ENCODE measurements at regions of chr12 and their contacts with region 1.

Region 1: DNA sequence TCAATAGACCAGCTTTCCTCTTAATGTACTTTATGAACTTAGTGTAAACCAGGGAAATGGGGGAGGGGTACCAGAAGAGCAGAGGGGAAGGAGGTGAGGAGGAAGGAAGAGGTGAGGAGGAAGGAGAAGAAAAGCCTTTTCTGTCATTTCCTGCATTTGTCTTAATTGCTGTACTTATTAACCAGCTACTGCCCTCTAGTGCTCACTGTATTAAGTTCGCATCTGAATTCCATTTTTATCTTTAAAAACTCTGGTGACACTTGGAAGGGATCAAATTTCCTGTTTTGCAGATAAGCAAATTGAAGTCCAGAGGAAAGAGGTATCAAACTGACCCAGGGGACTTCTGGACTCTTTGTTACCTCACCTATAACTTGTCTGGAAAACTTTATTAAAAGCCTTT is 22.2 kb downstream of the MANSC1 start:
- DNase-seq: peak; percentile 16
- ATAC-seq: peak; percentile 80
- H3K4me3 Mint-ChIP-seq: no peak overlapping the region
- H3K27ac Mint-ChIP-seq: peak overlapping the region; percentile 66
- H3K4me1 Mint-ChIP-seq: peaks cover 6% of the 10 kb centered on the region
- H3K27me3 Mint-ChIP-seq: no peaks in the 10 kb centered on the region
- CTCF ChIP-seq: peak; percentile 72

Region 2: DNA sequence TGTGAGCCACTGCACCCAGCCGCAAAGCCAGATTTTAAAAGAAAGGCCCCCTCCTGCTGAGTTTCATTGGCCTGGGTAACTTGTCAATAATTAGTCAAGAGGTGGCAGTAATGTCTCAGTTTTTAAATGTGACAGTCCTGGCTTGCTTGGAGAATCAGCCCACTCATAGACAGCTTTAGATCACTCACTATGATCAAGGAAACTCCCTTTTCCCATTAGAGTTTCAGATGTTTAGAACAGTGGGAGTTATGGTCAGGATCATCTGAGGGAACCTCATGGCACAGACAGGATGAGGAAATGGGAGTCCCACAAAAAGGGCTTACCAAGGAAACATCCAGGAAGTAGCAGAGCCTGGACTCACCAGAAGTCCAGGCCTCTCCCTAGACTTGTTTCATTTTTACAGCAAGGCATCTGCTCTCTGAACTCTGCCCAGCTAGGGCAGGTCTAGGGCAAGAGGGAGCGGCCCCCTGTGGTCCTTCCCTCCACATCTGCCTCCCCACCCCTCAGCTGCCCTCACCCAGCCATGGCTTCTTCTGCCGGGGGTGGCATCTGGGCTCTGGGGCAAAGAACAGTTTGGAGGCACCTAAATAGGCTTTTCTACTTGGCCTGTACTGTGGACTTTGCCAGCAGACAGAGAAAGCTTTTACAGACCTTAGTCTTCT is 245.8 kb before region 1 on chr12:
- CTCF ChIA-PET with region 1: interaction called, 34 read pairs
- POLR2A ChIA-PET with region 1: no interaction called
- intact Hi-C with region 1: loop called (anchors 5 kb)
- DNase-seq: no peak
- ATAC-seq: peak; percentile 66
- H3K4me3 Mint-ChIP-seq: no peak overlapping the region
- H3K27ac Mint-ChIP-seq: peak overlapping the region; percentile 42
- H3K4me1 Mint-ChIP-seq: peaks cover 3% of the 10 kb centered on the region
- H3K27me3 Mint-ChIP-seq: no peaks in the 10 kb centered on the region
- CTCF ChIP-seq: peak; percentile 11

Region 3: DNA sequence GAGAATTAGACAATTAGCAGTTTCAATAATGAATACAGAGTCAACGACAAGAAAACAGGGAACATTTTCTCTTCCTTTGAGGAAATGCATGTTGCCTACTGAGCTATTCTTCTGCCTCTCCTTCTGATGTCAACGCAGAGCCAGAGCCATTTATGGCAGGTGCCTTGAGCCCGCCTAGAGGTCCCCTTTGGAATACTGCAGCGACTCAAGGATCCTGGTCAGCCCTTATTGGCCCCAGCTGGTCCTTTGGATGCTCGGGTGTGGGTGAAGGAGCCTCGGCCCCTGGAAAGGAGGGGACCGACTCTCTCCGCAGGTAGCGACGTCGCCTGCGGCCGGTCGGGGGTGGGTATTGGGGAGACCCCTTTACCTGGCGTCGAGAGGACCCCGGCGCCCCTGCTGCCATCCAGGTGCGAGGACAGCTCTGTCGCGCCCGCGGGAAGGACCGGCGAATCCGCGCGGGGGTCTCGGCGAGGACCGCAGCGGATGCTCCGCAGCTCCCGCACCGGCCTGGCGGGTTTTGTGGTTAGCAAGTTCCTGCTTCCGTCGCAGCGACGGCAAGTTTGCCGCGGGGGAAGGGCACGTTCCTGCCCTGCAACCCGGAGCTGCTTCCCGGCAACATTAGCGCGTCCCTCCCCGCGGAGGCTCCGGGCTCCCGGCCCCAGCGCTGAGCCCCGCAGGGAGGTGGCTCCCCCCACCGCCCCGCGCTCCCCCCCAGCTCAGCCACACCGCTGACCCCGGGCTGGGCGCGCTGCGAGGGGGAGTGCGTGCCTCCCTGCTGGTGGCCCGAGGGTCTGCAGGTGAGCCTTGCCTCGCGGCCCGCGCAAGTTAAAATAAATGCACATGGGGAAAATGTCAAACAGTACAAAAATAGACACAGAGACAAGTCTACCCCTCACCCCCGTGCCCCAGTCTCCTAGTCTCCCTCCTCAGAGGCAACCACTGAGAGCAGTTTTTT is 22.2 kb after region 1 on chr12 and contains the start of gene MANSC1:
- CTCF ChIA-PET with region 1: interaction called, 82 read pairs
- POLR2A ChIA-PET with region 1: no interaction called
- intact Hi-C with region 1: no loop called
- DNase-seq: peak; percentile 54
- ATAC-seq: peak; percentile 91
- H3K4me3 Mint-ChIP-seq: peak within 1 kb of the TSS; percentile 68
- H3K27ac Mint-ChIP-seq: peak within 1 kb of the TSS; percentile 56
- H3K4me1 Mint-ChIP-seq: peaks cover 17% of the 10 kb centered on the region
- H3K27me3 Mint-ChIP-seq: no peaks in the 10 kb centered on the region
- CTCF ChIP-seq: peak; percentile 86
- total RNA-seq, gene MANSC1: 0.09 to 0.20 TPM

Measured in activated CD8-positive, alpha-beta T cell treated with anti-CD3 and anti-CD28 coated beads for 36 hours (primary cell).